Endothelial cell of umbilical vein (primary cell): ENCODE measurements at regions of chrX and their contacts with region 1.

Region 1: DNA sequence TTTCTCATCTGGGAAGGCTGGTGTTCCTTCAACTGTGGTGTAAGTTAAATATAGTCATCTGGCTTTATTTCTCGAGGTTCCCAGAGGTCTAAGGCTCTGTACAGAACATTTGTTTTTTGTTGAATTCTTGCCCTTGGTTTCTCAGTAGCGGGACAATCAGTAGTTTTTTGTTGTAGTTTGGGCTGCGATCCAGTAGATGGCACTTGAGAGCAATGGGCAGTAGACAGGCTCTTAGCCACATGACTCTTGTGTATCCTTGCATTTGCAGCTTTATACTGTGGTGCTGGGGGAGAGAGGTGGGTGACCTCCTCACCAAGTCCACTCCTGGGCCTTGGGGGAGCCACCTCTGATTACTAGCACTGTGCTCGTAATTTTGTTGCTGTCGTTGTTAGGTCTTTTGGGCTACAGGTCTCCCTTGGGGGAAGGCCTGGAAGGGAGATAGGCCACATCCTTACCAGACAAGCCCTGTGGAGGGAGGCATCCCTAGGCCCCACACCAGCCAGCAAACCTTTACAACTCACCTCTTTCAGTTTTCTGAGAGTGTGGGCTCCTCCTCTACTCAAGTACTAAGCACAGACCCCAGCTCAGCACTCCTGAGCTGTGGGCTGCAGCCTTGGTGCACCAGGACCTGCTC is 8.1 kb downstream of the ETDB start:
- DNase-seq: peak; percentile 39
- H3K4me3 ChIP-seq: no peak overlapping the region
- H3K27ac ChIP-seq: no peak overlapping the region
- H3K4me1 ChIP-seq: no peaks in the 10 kb centered on the region
- H3K27me3 ChIP-seq: peaks cover 0 to 2% of the 10 kb centered on the region in 2 experiments
- CTCF ChIP-seq: peak; percentile 35 to 67
- POLR2A ChIP-seq: no peak

Region 2: GRCh38 chrX:135050603-135051002 is 61.6 kb before region 1 on chrX:
- CTCF ChIA-PET with region 1: no interaction called
- POLR2A ChIA-PET with region 1: no interaction called
- dilution Hi-C with region 1: no loop called
- intact Hi-C with region 1: no loop called
- DNase-seq: no peak
- H3K4me3 ChIP-seq: peak overlapping the region in 1 of 3 experiments; percentile 59
- H3K27ac ChIP-seq: peak overlapping the region; percentile 17
- H3K4me1 ChIP-seq: peaks cover 6% of the 10 kb centered on the region
- H3K27me3 ChIP-seq: no peaks in the 10 kb centered on the region
- CTCF ChIP-seq: no peak
- POLR2A ChIP-seq: no peak

Region 3: DNA sequence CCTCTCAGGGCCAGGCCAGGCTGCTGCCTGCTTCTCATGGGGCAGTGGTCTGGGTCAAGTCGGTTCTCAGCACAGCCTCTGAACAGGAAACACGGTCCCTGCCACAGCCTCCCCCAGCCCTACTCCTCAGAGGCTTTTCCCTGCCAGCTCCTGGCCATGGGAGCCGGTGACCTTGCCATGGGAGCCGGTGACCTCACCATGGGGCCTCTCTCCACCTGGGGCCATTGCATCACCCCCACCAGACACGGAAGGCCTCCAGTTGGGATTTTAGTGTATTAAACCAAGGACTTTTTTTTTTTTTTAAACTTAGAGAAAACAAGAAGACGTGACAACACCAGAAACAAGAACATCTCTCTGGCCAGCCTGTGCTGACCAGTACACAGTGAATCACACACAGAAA is 17.5 kb before region 1 on chrX:
- CTCF ChIA-PET with region 1: no interaction called
- POLR2A ChIA-PET with region 1: no interaction called
- dilution Hi-C with region 1: no loop called
- intact Hi-C with region 1: no loop called
- DNase-seq: no peak
- H3K4me3 ChIP-seq: no peak overlapping the region
- H3K27ac ChIP-seq: no peak overlapping the region
- H3K4me1 ChIP-seq: no peaks in the 10 kb centered on the region
- H3K27me3 ChIP-seq: peaks cover 0 to 6% of the 10 kb centered on the region in 2 experiments
- CTCF ChIP-seq: no peak
- POLR2A ChIP-seq: no peak

Region 4: GRCh38 chrX:135536877-135537276 is 424.7 kb after region 1 on chrX:
- CTCF ChIA-PET with region 1: no interaction called
- POLR2A ChIA-PET with region 1: no interaction called
- dilution Hi-C with region 1: no loop called
- intact Hi-C with region 1: no loop called
- DNase-seq: no peak
- H3K4me3 ChIP-seq: no peak overlapping the region
- H3K27ac ChIP-seq: no peak overlapping the region
- H3K4me1 ChIP-seq: no peaks in the 10 kb centered on the region
- H3K27me3 ChIP-seq: no peaks in the 10 kb centered on the region
- CTCF ChIP-seq: no peak
- POLR2A ChIP-seq: no peak

Region 5: GRCh38 chrX:135596495-135596894 is 484.3 kb after region 1 on chrX:
- CTCF ChIA-PET with region 1: no interaction called
- POLR2A ChIA-PET with region 1: no interaction called
- dilution Hi-C with region 1: no loop called
- intact Hi-C with region 1: loop called (anchors 10 kb)
- DNase-seq: peak; percentile 1
- H3K4me3 ChIP-seq: no peak overlapping the region
- H3K27ac ChIP-seq: no peak overlapping the region
- H3K4me1 ChIP-seq: no peaks in the 10 kb centered on the region
- H3K27me3 ChIP-seq: no peaks in the 10 kb centered on the region
- CTCF ChIP-seq: peak; percentile 25 to 56
- POLR2A ChIP-seq: no peak